ENCODE measurements at regions of chr7 and their contacts with region 1.

Region 1: GRCh38 chr7:70693686-70694360 is 438.1 kb upstream of the GALNT17 start:
- H3K4me3 ChIP-seq: peak overlapping the region; percentile 92
- H3K27ac ChIP-seq: peak overlapping the region; percentile 97
- H3K4me1 ChIP-seq: peaks cover 10% of the 10 kb centered on the region
- CTCF ChIP-seq: peak; percentile 25; the same call in 1 of the 2 replicates

Region 2: GRCh38 chr7:70006261-70006920 is 687.4 kb before region 1 on chr7:
- CTCF ChIA-PET with region 1: no interaction called
- POLR2A ChIA-PET with region 1: interaction called, 10 read pairs
- H3K4me3 ChIP-seq: no peak overlapping the region
- H3K27ac ChIP-seq: no peak overlapping the region
- H3K4me1 ChIP-seq: peaks cover 4% of the 10 kb centered on the region; the same call in 1 of the 2 replicates
- CTCF ChIP-seq: no peak

Region 3: DNA sequence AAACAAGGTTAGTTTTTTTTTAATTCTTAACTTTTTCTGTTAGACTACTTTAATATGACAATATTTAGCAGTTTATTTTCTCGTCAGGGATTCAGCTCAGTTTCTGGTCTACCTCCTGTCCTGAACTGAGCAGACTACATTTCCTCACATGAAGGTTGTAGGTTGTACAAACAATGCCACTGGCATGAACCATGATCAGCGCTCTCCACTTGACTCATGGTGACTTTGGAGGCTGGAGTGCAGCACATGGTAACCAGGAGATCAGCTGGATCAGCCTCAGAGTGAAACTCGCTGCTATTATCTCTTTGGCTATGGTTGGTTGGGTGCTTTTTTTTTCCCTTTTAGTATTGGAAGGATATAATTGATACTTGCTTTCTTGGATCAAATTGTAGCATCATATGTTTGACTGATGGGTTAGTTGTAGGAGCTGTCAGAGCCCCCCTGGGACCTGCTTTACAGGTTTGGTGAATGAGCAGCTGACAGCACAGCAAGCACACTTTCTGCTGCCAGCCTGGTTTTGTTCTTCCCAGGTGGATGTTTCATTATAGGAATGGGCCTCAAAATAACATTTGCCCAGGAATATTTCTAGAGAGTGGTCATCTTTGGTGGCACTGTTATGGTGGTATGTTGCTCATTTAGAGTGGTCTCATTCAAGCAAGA is 539.2 kb before region 1 on chr7:
- CTCF ChIA-PET with region 1: interaction called, 22 read pairs
- POLR2A ChIA-PET with region 1: no interaction called
- H3K4me3 ChIP-seq: no peak overlapping the region
- H3K27ac ChIP-seq: no peak overlapping the region
- H3K4me1 ChIP-seq: no peaks in the 10 kb centered on the region; the same call in 1 of the 2 replicates
- CTCF ChIP-seq: no peak

Region 4: DNA sequence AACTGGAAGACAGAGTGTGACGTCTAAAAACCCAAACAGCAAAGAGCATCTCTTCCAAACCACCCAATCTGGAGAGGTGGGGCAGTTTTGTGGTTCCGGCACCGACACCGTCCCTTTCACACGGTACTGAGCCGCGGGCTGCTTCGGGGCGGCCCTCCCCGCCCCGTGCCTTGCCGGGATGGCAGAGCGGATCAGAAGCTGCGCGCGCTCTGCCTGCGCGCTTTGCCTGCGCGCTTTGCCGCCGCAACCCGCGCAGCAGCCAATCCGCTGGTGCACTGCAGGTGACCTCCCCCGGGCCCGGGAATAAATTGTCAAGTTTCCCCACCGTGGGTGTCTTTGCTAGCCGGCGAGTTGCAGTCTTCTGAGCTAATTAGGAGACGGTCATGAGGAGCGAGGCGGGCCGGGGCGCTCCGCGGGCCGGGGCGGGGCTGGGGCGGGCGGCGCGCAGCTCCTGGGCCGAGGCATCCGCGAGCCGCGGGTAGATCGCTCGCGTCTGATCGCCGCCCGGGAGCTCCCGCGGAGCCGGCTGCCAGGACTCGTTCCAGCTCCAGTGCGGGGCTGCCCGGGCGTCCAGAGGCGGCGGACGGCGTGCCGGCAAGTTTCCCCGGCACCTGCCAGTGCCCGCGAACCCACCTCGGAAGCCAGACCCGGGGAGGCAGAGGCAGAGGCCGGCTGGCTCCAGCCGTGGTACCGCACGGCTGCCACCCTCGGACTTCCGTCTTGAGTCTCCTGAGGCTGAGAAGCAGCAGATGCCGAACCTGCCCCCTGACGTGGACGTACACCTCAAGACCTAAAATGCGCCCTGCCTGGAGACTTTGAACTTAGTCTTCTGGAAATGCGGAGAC is 97.8 kb before region 1 on chr7:
- CTCF ChIA-PET with region 1: interaction called, 5 read pairs
- POLR2A ChIA-PET with region 1: interaction called, 13 read pairs
- H3K4me3 ChIP-seq: peak overlapping the region; percentile 62
- H3K27ac ChIP-seq: peak overlapping the region; percentile 27; the same call in 1 of the 2 replicates
- H3K4me1 ChIP-seq: peaks cover 12% of the 10 kb centered on the region
- CTCF ChIP-seq: no peak